ENCODE measurements at regions of chr7 and their contacts with region 1.

Region 1: GRCh38 chr7:67302113-67303039 is 305.7 kb downstream of the TYW1 start:
- DNase-seq: peak; percentile 99
- ATAC-seq: peak; percentile 88
- H3K4me3 Mint-ChIP-seq: peak overlapping the region; percentile 88
- H3K27ac Mint-ChIP-seq: peak overlapping the region; percentile 92
- H3K4me1 Mint-ChIP-seq: peaks cover 18% of the 10 kb centered on the region
- H3K27me3 Mint-ChIP-seq: no peaks in the 10 kb centered on the region

Region 2: DNA sequence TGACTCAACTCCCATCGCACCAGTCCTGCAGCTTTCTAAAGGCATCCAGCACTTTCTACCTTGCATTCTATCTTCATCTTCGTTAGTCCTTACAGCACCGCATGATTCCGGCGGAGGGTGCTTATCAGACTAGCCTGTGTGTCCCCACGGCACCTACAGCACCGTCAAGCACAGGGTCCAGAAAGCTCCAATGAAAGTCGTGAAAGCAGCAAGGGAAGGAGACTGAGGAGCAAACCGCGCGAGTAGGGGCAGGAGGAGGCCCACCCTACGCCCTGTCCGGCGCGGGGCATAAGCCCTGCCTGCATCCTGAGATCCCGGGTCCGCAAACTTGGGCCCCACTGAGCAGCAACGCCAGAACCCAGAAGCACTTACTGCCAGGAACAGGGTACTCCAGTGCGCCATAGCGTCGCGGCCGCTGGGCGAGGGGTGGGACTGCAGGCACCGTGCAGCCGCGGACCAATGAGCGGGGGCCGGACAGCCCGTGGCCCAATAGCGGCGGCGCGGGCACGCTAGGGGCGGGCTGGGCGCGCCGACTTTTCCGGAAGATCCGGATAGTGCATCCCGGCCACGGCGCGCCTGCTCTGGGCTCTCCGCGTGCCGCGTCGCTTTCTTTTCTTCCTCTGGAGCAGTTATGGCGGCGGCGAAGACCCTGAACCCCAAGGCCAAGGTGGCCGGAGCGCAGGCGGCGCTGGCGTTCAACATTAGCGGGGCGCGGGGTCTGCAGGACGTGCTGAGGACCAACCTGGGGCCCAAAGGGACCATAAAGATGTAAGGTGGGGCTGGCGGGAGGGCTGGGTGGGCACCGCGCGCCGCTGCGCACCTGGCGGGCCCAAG is 1551.6 kb before region 1 on chr7:
- CTCF ChIA-PET with region 1: no interaction called
- POLR2A ChIA-PET with region 1: no interaction called
- intact Hi-C with region 1: loop called in 1 of 2 experiments (anchors 5 kb)
- DNase-seq: peak; percentile 93
- ATAC-seq: peak; percentile 99
- H3K4me3 Mint-ChIP-seq: peak overlapping the region; percentile 95
- H3K27ac Mint-ChIP-seq: peak overlapping the region; percentile 94
- H3K4me1 Mint-ChIP-seq: peaks cover 31% of the 10 kb centered on the region
- H3K27me3 Mint-ChIP-seq: no peaks in the 10 kb centered on the region

Region 3: GRCh38 chr7:67045496-67045995 is 256.8 kb before region 1 on chr7:
- CTCF ChIA-PET with region 1: interaction called, 6 read pairs
- POLR2A ChIA-PET with region 1: no interaction called
- intact Hi-C with region 1: loop called in 1 of 2 experiments (anchors 2 kb)
- DNase-seq: no peak
- ATAC-seq: no peak
- H3K4me3 Mint-ChIP-seq: no peak overlapping the region
- H3K27ac Mint-ChIP-seq: no peak overlapping the region
- H3K4me1 Mint-ChIP-seq: peaks cover 3% of the 10 kb centered on the region
- H3K27me3 Mint-ChIP-seq: no peaks in the 10 kb centered on the region

Measured in activated CD4-positive, alpha-beta T cell treated with anti-CD3 and anti-CD28 coated beads for 36 hours (primary cell).